Mammary epithelial cell (primary cell): ENCODE measurements at regions of chr9 and their contacts with region 1.

Region 1: DNA sequence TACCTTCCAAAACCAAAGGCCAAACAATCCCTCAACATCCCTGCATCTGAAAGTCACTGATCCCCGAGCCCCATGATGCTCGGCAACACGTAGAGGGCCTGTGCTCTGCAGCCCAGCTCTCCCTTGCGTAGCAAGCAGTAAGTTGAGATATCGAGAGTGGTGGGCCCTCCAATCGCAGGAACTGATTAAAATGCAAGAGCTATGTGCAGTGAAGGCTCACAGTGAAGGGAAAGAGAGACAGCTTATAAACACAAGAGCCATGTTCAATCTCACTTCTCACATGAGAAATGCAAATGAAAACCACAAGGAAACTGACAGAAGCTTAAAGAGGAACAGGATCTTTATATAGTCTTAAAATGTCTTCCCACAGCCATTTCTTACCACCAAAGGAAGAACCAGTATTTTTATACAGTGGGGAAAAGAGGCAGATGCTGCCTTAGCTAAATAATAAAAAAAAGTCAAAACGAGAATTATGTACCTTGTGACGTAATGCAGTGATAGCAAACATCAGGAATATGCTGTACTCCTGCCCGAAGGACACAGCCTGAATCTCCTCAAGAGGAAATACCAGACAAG is 24.6 kb downstream of the TTF1 start:
- DNase-seq: no peak
- H3K4me3 ChIP-seq: no peak overlapping the region
- H3K27ac ChIP-seq: no peak overlapping the region
- H3K4me1 ChIP-seq: no peaks in the 10 kb centered on the region
- H3K27me3 ChIP-seq: no peaks in the 10 kb centered on the region
- CTCF ChIP-seq: no peak

Region 2: GRCh38 chr9:132327537-132327936 is 54.5 kb before region 1 on chr9:
- CTCF ChIA-PET with region 1: no interaction called
- dilution Hi-C with region 1: loop called (anchors 5 kb)
- in situ Hi-C with region 1: no loop called
- intact Hi-C with region 1: no loop called
- DNase-seq: no peak
- H3K4me3 ChIP-seq: no peak overlapping the region
- H3K27ac ChIP-seq: no peak overlapping the region
- H3K4me1 ChIP-seq: no peaks in the 10 kb centered on the region
- H3K27me3 ChIP-seq: no peaks in the 10 kb centered on the region
- CTCF ChIP-seq: no peak

Region 3: DNA sequence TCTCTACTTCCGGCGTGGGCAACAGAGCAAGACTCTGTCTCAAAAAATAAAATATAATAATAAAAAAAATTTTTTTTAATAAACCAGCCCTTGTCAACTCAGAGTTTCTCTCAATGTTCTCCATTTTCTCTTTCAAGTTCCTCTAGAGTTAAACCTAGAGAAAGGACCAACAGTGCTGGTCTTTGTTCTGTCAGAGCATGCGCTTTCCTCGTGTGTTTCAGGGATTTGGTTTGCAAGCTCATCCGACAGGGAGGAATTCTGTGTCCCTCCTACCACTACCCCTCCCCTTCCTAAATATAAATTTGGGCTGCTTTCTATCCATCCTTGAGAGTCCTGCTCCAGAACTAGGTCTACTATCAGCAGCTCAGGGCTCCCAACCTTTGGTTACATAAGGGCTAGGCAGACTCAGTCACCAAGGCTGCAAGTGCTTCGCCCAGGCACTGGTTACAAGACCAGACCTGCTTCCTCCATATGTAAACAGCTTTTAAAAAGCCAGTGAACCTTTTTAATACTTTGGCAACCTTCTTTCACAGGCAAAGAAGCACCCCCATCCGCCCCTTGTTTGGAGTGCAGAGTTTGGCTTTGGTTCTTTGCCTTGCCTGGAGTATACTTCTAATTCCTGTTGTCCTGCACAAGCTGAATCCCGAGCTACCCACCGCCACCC is 40.7 kb before region 1 on chr9:
- CTCF ChIA-PET with region 1: no interaction called
- dilution Hi-C with region 1: no loop called
- in situ Hi-C with region 1: no loop called
- intact Hi-C with region 1: no loop called
- DNase-seq: peak; percentile 8
- H3K4me3 ChIP-seq: no peak overlapping the region
- H3K27ac ChIP-seq: no peak overlapping the region
- H3K4me1 ChIP-seq: no peaks in the 10 kb centered on the region
- H3K27me3 ChIP-seq: no peaks in the 10 kb centered on the region
- CTCF ChIP-seq: no peak